ENCODE measurements at regions of chr11 and their contacts with region 1.

Region 1: DNA sequence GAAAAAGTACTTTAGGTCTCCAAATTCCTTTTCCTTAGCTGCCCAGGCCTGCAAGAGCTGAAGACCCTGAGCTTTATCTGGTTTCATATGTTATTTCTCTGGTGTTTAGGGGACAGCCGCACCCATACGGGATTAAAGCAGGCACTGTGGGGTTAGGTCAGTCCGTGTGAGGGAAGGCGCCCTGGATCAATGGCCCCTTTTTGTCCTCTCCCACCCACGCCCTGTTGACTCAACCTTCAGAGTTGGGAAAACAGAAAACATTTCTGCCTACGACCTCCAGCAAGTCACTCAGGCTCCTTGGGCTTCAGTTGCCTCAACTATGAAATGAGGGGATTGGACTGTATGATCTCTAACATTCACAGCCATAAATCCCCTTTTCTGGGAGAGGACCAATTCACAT is 55.2 kb upstream of the BARX2 start:
- H3K4me3 ChIP-seq: no peak overlapping the region
- H3K27ac ChIP-seq: no peak overlapping the region
- H3K4me1 ChIP-seq: no peaks in the 10 kb centered on the region
- CTCF ChIP-seq: no peak

Region 2: DNA sequence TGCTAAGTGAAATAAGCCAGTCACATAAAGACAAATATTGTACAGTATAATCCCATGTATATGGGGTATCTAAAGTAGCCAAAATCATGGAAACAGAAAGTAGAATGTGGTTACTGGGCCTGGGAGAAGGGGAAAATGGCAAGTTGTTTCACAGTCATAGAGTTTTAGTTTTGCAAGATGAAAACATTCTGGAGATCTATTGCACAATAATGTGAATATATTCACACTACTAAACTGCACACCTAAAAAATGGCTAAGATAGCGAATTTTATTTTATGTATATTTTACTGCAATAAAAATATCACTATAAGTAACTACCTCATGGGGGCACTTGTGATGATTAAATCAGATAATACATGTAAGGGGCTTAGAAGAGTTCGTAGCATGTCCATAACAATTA is 56.4 kb before region 1 on chr11:
- CTCF ChIA-PET with region 1: no interaction called
- POLR2A ChIA-PET with region 1: no interaction called
- H3K4me3 ChIP-seq: no peak overlapping the region
- H3K27ac ChIP-seq: no peak overlapping the region
- H3K4me1 ChIP-seq: peaks cover 17% of the 10 kb centered on the region
- CTCF ChIP-seq: no peak

Region 3: DNA sequence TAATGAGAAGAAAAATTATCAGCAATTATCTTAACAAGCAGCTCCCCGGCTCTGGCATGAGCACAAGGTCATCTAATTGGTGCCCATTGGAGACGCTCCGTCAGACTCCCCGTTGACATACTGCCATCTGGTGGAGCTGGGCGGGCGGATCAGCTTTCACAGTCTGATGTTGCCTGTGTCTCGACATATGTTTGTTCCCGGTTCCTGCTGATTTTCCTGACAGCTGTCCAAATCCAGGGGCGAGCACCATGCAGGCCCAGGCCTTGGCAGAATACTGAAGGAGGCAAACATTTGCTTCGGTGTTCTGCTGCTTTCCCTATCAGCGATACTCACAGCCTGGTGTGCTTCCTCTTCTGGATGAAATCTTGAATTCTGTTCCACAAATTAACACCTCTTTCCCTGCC is 11.4 kb after region 1 on chr11:
- CTCF ChIA-PET with region 1: interaction called, 19 read pairs
- POLR2A ChIA-PET with region 1: interaction called, 3 read pairs
- H3K4me3 ChIP-seq: no peak overlapping the region
- H3K27ac ChIP-seq: no peak overlapping the region
- H3K4me1 ChIP-seq: no peaks in the 10 kb centered on the region
- CTCF ChIP-seq: peak; percentile 65

Measured in HEK293 (cell line).